Vagina (tissue), 2 donors: ENCODE measurements at regions of chr13 and their contacts with region 1.

Region 1: GRCh38 chr13:113364311-113364889 is 470 bp upstream of the GRTP1 start:
- DNase-seq: no peak
- H3K4me3 ChIP-seq: peak overlapping the region; percentile 62 to 82
- H3K27ac ChIP-seq: peak overlapping the region; percentile 89
- H3K4me1 ChIP-seq: peaks cover 29% of the 10 kb centered on the region
- H3K27me3 ChIP-seq: no peaks in the 10 kb centered on the region
- CTCF ChIP-seq: no peak
- POLR2A ChIP-seq: peak in 1 of 2 donors; percentile 10

Region 2: DNA sequence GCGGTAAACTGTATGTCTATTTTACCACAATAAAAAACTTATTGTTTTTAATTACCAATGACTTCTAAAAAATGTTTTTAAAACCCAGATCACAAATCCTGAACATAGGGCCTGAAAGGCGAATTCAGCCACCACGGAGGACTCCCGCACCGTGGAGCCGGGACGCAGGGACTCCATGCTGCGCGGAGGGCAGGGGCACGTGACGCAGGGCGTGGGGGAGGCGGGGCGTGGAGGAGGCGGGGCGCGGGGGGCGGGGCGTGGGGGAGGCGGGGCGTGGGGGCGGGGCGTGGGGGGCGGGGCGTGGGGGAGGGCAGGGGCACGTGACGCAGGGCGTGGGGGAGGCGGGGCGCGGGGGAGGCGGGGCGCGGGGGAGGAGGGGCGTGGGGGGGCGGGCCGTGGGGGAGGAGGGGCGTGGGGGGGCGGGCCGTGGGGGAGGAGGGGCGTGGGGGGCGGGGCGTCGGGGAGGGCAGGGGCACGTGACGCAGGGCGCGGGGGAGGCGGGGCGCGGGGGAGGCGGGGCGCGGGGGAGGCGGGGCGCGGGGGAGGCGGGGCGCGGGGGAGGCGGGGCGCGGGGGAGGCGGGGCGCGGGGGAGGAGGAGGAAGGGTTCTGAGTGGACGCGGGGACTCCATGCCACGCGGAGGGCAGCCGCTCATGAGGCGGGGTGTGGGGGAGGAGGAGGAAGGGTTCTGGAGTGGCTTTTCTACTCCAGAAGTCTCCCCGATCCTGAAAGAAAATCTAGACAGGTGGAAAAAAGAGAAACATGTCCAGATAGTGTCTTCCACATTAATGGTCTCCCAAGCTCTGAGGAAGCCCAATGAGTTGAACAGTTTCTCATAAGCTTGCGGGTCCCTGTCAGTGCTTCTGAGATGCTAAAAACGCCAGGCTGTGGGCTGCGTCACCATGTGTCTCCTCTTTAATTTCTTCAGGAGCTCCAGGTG is 210.3 kb before region 1 on chr13:
- intact Hi-C with region 1: loop called (anchors 10 kb)
- DNase-seq: peak; percentile 89 to 95
- H3K4me3 ChIP-seq: peak overlapping the region; percentile 47 to 60
- H3K27ac ChIP-seq: peak overlapping the region; percentile 79
- H3K4me1 ChIP-seq: peaks cover 24% of the 10 kb centered on the region
- H3K27me3 ChIP-seq: no peaks in the 10 kb centered on the region
- CTCF ChIP-seq: no peak
- POLR2A ChIP-seq: peak in 1 of 2 donors; percentile 58

Region 3: GRCh38 chr13:113296842-113297369 is 67.5 kb before region 1 on chr13 and contains the start of gene LAMP1:
- intact Hi-C with region 1: loop called (anchors 5 kb)
- DNase-seq: peak; percentile 97 to 98
- H3K4me3 ChIP-seq: peak within 1 kb of the TSS; percentile 91 to 98
- H3K27ac ChIP-seq: peak within 1 kb of the TSS; percentile 83
- H3K4me1 ChIP-seq: peaks cover 35% of the 10 kb centered on the region
- H3K27me3 ChIP-seq: no peaks in the 10 kb centered on the region
- CTCF ChIP-seq: peak in 1 of 3 experiments; percentile 8
- POLR2A ChIP-seq: peak in 1 of 2 donors; percentile 21
- total RNA-seq, gene LAMP1: 77.8 TPM